HEK293 (cell line): ENCODE measurements at regions of chr1 and their contacts with region 1.

Region 1: DNA sequence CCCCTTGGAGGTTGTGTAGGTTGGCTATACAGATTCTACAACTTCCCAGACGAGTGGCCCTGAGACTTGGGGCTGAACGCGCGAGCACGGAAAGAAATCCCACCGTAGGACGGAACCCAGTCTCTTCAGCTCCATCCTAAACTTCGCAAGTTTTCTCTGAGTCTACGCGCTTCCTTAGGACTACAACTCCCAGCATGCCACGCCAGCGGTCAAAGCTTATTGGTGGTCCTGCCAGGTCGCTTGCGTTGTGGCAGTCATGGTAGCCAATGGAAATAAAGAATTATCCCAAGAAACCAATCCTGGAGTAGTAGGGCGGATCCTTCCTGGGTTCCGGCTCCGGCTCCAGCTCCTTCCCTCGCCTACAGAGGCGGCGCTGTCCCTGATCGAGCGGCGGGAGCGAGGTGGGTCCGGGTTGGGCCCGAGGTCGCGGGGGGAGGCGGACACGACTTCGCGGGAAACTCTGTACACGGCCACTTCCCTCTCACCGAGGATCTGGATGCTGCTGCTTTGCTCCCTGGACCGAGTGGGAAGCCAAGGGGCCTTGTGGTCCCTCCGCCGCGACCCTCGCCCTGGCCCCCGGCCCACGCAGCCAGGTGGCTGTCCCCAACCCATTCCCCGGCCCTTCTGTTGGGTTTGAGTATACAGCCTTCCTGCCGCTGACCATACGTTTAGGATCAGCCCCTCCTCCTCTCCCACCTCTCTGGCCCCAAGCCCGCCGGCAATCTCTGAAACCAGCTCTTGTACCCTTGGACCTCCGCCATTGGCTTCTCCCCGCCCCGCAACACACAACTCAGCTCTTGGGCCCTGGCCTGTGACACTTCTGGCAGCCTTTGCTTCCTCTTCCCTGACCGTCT is at the start of gene ZNF691:
- H3K4me3 ChIP-seq: peak within 1 kb of the TSS; percentile 85
- H3K27ac ChIP-seq: peak within 1 kb of the TSS; percentile 70
- H3K4me1 ChIP-seq: no peaks in the 10 kb centered on the region
- CTCF ChIP-seq: peak; percentile 96

Region 2: DNA sequence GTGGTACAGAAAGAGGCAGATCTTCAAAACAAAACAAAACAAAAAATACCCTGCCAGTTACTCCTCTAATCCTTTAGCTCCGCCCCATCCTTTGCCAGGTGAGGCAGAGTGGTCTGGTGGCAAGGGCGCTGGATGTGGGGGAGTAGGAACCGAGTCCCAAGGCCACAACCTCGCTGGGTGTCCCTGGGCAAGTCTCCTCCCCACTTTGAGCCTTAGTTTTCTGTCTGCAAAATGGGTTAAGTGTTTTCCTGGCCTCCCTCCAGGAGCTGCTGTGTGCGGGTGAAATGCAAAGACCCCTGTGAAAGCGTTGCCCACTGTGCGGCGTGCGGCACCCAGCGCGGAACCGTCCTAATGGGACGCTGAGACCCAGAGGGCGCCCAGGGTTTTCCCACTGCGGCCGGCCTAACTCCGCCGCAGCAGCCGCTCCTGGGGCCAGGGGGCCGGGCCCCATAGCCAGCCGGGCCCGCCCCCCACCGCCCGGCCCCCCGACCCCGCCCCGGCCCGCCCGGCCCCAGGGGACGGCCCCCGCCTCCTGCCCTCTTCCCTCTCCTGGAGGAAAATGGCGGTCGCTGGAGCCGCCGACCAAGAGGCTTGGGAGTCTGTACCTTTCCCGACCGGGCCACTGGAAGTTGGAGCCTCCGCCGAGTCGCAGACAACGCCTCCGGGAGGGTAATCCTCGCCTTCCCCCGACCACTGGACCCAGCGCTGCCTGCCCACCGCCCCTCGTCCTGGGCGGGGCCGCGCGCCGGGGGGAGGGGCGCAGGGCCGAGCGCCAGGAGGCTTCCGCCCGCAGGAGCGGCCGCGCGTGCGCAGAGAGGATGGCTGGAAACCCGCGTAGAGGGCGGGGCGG is 29.7 kb before region 1 on chr1 and contains the starts of genes ERMAP and SVBP:
- CTCF ChIA-PET with region 1: interaction called, 5 read pairs
- POLR2A ChIA-PET with region 1: interaction called, 18 read pairs
- H3K4me3 ChIP-seq: peak within 1 kb of the TSS; percentile 86
- H3K27ac ChIP-seq: peak within 1 kb of the TSS; percentile 98
- H3K4me1 ChIP-seq: peaks cover 2% of the 10 kb centered on the region; the same call in 1 of the 2 replicates
- CTCF ChIP-seq: peak; percentile 69

Region 3: GRCh38 chr1:43035821-43036741 is 189.6 kb after region 1 on chr1:
- CTCF ChIA-PET with region 1: no interaction called
- POLR2A ChIA-PET with region 1: no interaction called
- H3K4me3 ChIP-seq: no peak overlapping the region
- H3K27ac ChIP-seq: no peak overlapping the region
- H3K4me1 ChIP-seq: no peaks in the 10 kb centered on the region
- CTCF ChIP-seq: no peak